ENCODE measurements at regions of chr14 and their contacts with region 1.

Region 1: DNA sequence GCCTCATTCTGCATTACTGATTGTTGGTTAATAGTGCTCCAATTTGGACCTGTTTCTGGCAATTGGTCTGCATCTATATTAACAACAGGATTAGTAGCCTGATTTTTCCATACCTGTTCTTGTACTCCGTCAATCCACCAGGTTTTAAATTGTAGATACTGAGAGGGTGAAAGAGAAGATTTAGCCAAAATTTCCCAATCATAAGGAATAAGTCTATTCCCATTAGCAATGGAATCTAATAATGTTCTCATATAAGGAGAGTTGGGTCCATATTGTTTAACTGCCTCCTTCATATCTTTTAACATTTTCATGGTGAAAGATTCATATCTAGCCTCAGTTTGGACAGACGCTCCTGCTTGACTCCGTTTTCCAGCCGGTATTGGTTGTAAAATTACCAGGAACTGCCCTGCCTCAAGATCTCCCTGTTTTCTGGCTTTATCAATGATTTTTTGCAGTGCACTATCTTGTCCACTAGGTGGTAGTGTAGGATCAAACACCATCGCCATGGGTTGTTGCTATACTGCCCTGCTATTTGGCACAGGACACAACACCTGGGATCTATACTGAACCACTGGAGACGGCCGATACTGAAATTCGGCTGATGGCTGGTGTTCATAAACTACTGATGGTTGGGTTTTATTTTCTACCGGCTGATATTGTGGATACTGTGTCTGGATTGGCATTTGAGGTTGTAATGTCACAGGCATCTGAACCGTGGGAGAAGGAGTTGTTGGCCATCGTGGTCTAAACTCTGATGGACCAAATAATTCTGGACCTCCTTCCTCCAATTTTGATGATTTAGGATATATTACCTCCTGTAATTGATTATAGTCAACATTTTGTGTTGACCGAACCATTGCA is 25.2 kb downstream of the DHRS4L2 start:
- DNase-seq: peak; percentile 37 to 40
- H3K4me3 ChIP-seq: no peak overlapping the region
- H3K27ac ChIP-seq: no peak overlapping the region
- H3K4me1 ChIP-seq: no peaks in the 10 kb centered on the region
- H3K27me3 ChIP-seq: no peaks in the 10 kb centered on the region
- CTCF ChIP-seq: peak; percentile 85

Region 2: GRCh38 chr14:24036169-24036962 is 22.5 kb after region 1 on chr14:
- CTCF ChIA-PET with region 1: no interaction called
- POLR2A ChIA-PET with region 1: no interaction called
- intact Hi-C with region 1: loop called (anchors 2 kb)
- DNase-seq: peak; percentile 38 to 72
- H3K4me3 ChIP-seq: peak overlapping the region; percentile 62
- H3K27ac ChIP-seq: no peak overlapping the region
- H3K4me1 ChIP-seq: peaks cover 4% of the 10 kb centered on the region; the same call in 1 of the 2 replicates
- H3K27me3 ChIP-seq: no peaks in the 10 kb centered on the region
- CTCF ChIP-seq: peak; percentile 75

Region 3: DNA sequence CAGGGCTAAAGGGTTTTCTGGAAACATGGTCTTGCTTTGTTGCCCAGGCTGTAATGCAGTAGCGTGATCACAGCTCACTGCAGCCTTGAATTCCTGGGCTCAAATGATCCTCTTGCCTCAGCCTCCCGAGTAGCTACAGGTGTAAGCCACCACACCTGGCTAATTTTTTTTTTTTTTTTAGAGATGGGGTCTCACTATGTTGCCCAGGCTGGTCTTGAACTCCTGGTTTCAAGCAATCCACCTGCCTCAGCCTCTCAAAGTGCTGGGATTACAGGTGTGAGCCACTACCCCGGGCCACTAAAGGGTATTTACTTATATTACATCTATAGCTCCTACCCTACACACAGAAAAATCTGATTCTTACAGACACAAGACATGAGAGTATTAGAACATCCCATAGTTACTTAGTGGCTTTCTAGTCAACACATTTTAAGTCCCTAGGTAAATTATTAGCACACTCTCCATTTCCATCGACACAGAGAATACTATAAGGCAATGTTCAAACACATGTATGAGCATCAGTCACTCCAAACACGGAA is 94.5 kb after region 1 on chr14:
- CTCF ChIA-PET with region 1: no interaction called
- POLR2A ChIA-PET with region 1: no interaction called
- intact Hi-C with region 1: loop called (anchors 2 kb)
- DNase-seq: no peak
- H3K4me3 ChIP-seq: no peak overlapping the region
- H3K27ac ChIP-seq: no peak overlapping the region
- H3K4me1 ChIP-seq: peaks cover 21% of the 10 kb centered on the region
- H3K27me3 ChIP-seq: no peaks in the 10 kb centered on the region
- CTCF ChIP-seq: no peak

Measured in PC-9 (cell line).